Motor neuron (in vitro differentiated cells): ENCODE measurements at regions of chr1 and their contacts with region 1.

Region 1: DNA sequence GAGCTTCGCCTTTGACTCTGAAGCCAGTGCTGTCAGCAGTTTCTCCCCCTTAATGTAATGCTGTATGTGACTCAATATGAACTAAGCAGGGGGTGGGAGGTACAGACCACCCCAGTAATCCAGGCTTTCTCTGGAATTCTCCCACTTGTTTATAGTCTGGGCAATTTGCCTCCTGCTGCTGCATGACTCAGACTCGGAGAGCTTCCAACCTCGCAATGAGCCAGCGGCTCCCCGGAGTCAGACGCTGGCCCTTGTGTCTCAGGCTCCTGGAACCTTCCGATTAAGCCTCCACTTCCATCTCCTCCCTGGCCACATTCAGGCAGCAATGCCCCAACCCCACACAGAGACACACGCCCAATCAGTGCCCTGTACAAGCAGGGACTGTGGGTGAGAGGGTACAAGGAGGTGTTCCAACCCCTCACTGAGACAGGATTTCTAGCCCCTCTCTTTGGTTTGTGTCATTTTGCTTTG is 471.7 kb upstream of the VAMP3 start:
- ATAC-seq: peak; percentile 48 to 90 (median 80)
- H3K4me3 ChIP-seq: no peak overlapping the region
- H3K27ac ChIP-seq: peak overlapping the region in 1 of 2 donors; percentile 13
- H3K4me1 ChIP-seq: peaks cover 22 to 46% of the 10 kb centered on the region in 2 donors

Region 2: GRCh38 chr1:7207875-7208646 is 91.3 kb before region 1 on chr1:
- in situ Hi-C with region 1: loop called in 1 of 9 experiments (anchors 25 kb)
- ATAC-seq: peak; percentile 62 to 98 (median 86)
- H3K4me3 ChIP-seq: no peak overlapping the region
- H3K27ac ChIP-seq: no peak overlapping the region
- H3K4me1 ChIP-seq: no peaks in the 10 kb centered on the region

Region 3: GRCh38 chr1:7379445-7379971 is 80.1 kb after region 1 on chr1:
- in situ Hi-C with region 1: loop called in 1 of 9 experiments (anchors 25 kb)
- ATAC-seq: peak in 7 of 8 experiments; percentile 29 to 90 (median 82)
- H3K4me3 ChIP-seq: peak overlapping the region in 2 of 5 donors; percentile 8 to 14
- H3K27ac ChIP-seq: peak overlapping the region; percentile 67 to 73
- H3K4me1 ChIP-seq: peaks cover 35 to 38% of the 10 kb centered on the region in 2 donors